ENCODE measurements at regions of chr10 and their contacts with region 1.

Region 1: GRCh38 chr10:23158370-23158769 is 33.7 kb upstream of the PTF1A start:
- DNase-seq: peak; percentile 56
- ATAC-seq: peak; percentile 80
- H3K4me3 Mint-ChIP-seq: peak overlapping the region; percentile 59
- H3K27ac Mint-ChIP-seq: no peak overlapping the region
- H3K4me1 Mint-ChIP-seq: peaks cover 15% of the 10 kb centered on the region
- H3K27me3 Mint-ChIP-seq: peaks cover 16% of the 10 kb centered on the region
- CTCF ChIP-seq: peak; percentile 88; the same call in 1 of the 2 replicates

Region 2: GRCh38 chr10:22988581-22989360 is 169.6 kb before region 1 on chr10:
- CTCF ChIA-PET with region 1: no interaction called
- POLR2A ChIA-PET with region 1: no interaction called
- DNase-seq: peak; percentile 39
- ATAC-seq: peak; percentile 46; the same call in 1 of the 2 replicates
- H3K4me3 Mint-ChIP-seq: peak overlapping the region; percentile 10; the same call in 1 of the 2 replicates
- H3K27ac Mint-ChIP-seq: no peak overlapping the region
- H3K4me1 Mint-ChIP-seq: peaks cover 35% of the 10 kb centered on the region
- H3K27me3 Mint-ChIP-seq: no peaks in the 10 kb centered on the region
- CTCF ChIP-seq: peak; percentile 68

Region 3: GRCh38 chr10:23186697-23187096 is 28.3 kb after region 1 on chr10:
- CTCF ChIA-PET with region 1: interaction called, 21 read pairs
- POLR2A ChIA-PET with region 1: no interaction called
- DNase-seq: no peak
- ATAC-seq: peak; percentile 23; the same call in 1 of the 2 replicates
- H3K4me3 Mint-ChIP-seq: no peak overlapping the region
- H3K27ac Mint-ChIP-seq: no peak overlapping the region
- H3K4me1 Mint-ChIP-seq: peaks cover 27% of the 10 kb centered on the region
- H3K27me3 Mint-ChIP-seq: peaks cover 90% of the 10 kb centered on the region
- CTCF ChIP-seq: no peak

Region 4: GRCh38 chr10:23198940-23199767 is 40.8 kb after region 1 on chr10:
- CTCF ChIA-PET with region 1: interaction called, 13 read pairs
- POLR2A ChIA-PET with region 1: no interaction called
- DNase-seq: peak; percentile 78
- ATAC-seq: peak; percentile 74
- H3K4me3 Mint-ChIP-seq: peak overlapping the region; percentile 61
- H3K27ac Mint-ChIP-seq: no peak overlapping the region
- H3K4me1 Mint-ChIP-seq: peaks cover 55% of the 10 kb centered on the region
- H3K27me3 Mint-ChIP-seq: peaks cover 100% of the 10 kb centered on the region
- CTCF ChIP-seq: no peak

Region 5: DNA sequence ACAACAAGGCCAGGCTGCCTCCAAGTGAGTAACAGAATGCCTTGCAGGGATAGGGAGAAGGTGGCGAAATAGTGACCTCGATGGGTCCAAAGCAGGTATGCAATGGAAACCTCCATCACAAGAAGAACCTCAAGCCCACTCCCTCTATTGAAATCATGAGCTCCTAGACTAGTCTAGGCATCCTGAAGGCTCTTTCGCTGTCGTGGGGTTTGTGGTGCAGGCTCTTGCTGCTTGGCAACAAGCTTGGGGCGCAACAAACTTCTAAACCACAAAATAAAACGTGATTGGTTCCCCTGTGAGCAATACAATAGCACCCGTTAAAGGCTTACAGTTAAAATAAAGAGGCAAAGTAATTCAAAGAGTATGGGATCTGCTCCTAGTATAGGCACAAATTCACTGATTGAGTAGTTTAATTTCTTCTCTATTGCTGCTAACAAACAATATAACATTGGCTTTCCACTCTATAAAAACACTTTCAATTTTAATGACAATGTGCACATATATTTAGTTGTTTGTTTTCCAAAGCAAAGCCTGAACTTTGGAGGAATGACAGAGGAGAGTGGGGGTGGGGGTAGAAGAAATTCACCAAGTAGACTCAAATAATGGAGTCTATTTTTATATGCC is 122.2 kb after region 1 on chr10:
- CTCF ChIA-PET with region 1: interaction called, 23 read pairs
- POLR2A ChIA-PET with region 1: no interaction called
- DNase-seq: peak; percentile 38
- ATAC-seq: peak; percentile 88
- H3K4me3 Mint-ChIP-seq: peak overlapping the region; percentile 42
- H3K27ac Mint-ChIP-seq: peak overlapping the region; percentile 70
- H3K4me1 Mint-ChIP-seq: peaks cover 25% of the 10 kb centered on the region
- H3K27me3 Mint-ChIP-seq: no peaks in the 10 kb centered on the region; the same call in 1 of the 2 replicates
- CTCF ChIP-seq: no peak

Region 6: GRCh38 chr10:23314835-23315239 is 156.5 kb after region 1 on chr10:
- CTCF ChIA-PET with region 1: interaction called, 13 read pairs
- POLR2A ChIA-PET with region 1: no interaction called
- DNase-seq: no peak
- ATAC-seq: no peak
- H3K4me3 Mint-ChIP-seq: no peak overlapping the region
- H3K27ac Mint-ChIP-seq: no peak overlapping the region
- H3K4me1 Mint-ChIP-seq: no peaks in the 10 kb centered on the region
- H3K27me3 Mint-ChIP-seq: no peaks in the 10 kb centered on the region
- CTCF ChIP-seq: peak; percentile 48

Measured in WTC11 (cell line).